ENCODE measurements at regions of chr2 and their contacts with region 1.

Region 1: DNA sequence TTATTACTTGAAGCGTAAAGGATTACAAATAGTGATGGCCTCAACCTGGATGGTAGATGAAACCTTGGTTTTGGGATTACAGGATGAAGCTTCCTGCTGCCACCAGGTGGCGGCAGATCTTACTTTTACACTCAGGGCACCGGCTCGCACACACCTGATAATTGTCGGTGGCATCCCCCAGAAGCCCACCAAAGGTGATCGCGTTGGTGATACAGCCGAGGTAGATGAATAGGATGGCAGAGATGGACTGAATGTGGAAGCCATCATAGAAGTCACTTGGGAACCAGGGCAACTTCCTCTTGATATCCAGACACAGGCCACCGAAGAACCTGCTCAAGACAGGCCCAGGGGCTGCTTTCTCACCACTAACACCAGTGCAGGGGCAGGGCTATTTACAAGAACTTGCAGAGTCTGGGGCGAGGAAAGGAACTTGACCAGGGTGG is 51.8 kb downstream of the MTHFD2 start:
- DNase-seq: peak in 1 of 3 donors; percentile 39
- ATAC-seq: peak; percentile 67 to 84 (median 81)
- H3K4me3 ChIP-seq: no peak overlapping the region
- H3K27ac ChIP-seq: no peak overlapping the region
- H3K4me1 ChIP-seq: no peaks in the 10 kb centered on the region
- H3K27me3 ChIP-seq: no peaks in the 10 kb centered on the region
- CTCF ChIP-seq: peak; percentile 62 to 84 (median 82)
- POLR2A ChIP-seq: no peak

Region 2: DNA sequence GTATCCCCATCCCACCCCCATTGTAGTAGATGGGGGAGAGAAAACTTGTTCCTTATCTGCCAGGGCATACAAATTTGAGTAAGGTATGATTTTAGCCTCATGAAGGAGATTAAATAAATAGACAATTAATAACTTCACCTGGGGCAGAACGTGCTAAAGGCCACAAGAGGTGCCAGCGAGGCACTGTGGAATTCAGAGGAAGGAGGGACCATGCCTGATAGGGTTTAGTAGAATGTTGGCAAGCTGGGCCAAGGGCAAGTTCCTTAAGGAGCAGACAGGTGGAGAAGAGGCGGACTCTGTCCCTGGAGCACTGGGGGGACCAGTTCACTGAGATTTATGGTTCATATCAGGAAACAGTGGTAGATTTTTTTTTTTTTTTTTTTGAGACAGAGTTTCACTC is 398.9 kb before region 1 on chr2:
- intact Hi-C with region 1: no loop called
- DNase-seq: no peak
- ATAC-seq: no peak
- H3K4me3 ChIP-seq: no peak overlapping the region
- H3K27ac ChIP-seq: no peak overlapping the region
- H3K4me1 ChIP-seq: no peaks in the 10 kb centered on the region
- H3K27me3 ChIP-seq: no peaks in the 10 kb centered on the region
- CTCF ChIP-seq: peak in 1 of 4 donors; percentile 5
- POLR2A ChIP-seq: no peak

Region 3: DNA sequence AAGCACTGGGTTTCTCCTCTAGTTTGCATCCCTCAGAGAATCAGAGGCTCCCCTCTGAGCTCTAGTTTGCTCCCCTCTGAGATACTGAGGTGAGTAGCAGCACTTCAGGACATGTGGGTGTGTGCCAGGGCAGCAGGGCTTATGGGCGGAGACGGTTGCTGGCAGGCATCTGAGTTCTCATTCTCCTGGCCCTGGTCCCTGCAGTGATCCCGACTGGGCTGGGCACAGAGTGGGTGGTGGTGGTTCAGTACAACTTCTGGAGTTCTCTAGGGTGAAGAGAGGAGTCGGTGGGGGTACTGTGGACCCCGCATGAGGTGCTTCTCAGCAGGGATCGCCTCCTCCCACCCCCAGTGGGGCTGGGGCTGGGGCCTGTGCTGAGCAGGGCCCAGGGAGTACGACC is 150.4 kb before region 1 on chr2:
- intact Hi-C with region 1: no loop called
- DNase-seq: no peak
- ATAC-seq: peak; percentile 35 to 87 (median 50)
- H3K4me3 ChIP-seq: no peak overlapping the region
- H3K27ac ChIP-seq: no peak overlapping the region
- H3K4me1 ChIP-seq: no peaks in the 10 kb centered on the region
- H3K27me3 ChIP-seq: no peaks in the 10 kb centered on the region
- CTCF ChIP-seq: no peak
- POLR2A ChIP-seq: no peak

Region 4: GRCh38 chr2:74345272-74345943 is 95.2 kb after region 1 on chr2:
- intact Hi-C with region 1: loop called in 1 of 2 experiments (anchors 10 kb)
- DNase-seq: no peak
- ATAC-seq: no peak
- H3K4me3 ChIP-seq: no peak overlapping the region
- H3K27ac ChIP-seq: no peak overlapping the region
- H3K4me1 ChIP-seq: no peaks in the 10 kb centered on the region
- H3K27me3 ChIP-seq: no peaks in the 10 kb centered on the region
- CTCF ChIP-seq: no peak
- POLR2A ChIP-seq: no peak

Region 5: DNA sequence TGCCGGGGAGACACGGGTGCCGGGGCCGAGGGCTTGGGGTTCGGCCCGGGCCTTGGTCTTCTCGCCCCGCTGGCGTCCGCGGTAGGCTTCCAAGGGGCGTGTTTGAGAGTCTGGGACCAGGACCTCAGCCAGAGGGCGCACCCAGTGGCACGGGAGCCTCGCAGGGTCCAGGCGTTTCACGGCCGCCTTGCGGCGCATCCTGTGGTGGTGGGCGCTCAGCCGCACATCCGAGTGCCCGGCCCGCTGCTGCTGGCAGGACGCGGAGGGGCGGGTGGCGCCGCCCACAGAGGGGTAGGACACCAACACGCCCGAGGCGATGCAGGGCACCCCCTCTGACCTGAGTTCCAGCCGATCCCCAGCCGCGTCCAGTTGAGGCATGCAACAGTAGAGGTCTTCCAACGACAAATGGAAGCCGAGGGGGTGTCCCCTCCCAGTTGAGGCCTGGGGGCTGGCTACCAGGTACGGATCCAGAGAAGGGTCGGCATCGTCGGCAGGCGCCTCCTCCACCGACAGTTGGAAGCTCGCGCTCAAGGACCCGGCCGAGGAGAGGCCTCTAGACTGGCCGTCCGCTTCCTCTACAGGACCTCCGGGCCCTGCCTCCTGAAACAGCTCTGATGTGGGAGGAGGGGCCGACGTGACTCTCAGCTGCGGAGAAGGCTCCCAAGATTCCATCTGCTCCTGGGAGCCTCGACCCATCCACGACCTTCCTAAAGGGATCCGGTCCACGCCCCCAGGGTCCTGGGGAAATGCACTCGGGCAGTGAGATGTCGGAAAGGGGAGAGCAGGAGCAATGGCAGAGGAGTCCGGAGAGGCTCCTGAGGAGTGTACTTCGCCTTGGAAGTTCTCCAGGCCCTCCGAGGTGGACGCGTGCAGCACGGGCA is 164.9 kb after region 1 on chr2:
- intact Hi-C with region 1: loop called in 1 of 2 experiments (anchors 10 kb)
- DNase-seq: peak in 2 of 3 donors; percentile 50 to 63
- ATAC-seq: peak; percentile 58 to 71 (median 68)
- H3K4me3 ChIP-seq: peak overlapping the region; percentile 24 to 46 (median 42)
- H3K27ac ChIP-seq: peak overlapping the region in 2 of 3 donors; percentile 17 to 29
- H3K4me1 ChIP-seq: peaks cover 0 to 9% (median 0%) of the 10 kb centered on the region in 4 donors
- H3K27me3 ChIP-seq: peaks cover 0 to 4% of the 10 kb centered on the region in 2 donors
- CTCF ChIP-seq: peak in 3 of 4 donors; percentile 14 to 28 (median 19)
- POLR2A ChIP-seq: no peak